Right ventricle myocardium inferior (tissue), 1 donor: ENCODE measurements at regions of chr6 and their contacts with region 1.

Region 1: GRCh38 chr6:125670568-125670967 is 78.9 kb upstream of the HEY2 start:
- DNase-seq: no peak
- ATAC-seq: peak; percentile 90

Region 2: GRCh38 chr6:125480571-125480970 is 190.0 kb before region 1 on chr6:
- intact Hi-C with region 1: no loop called
- DNase-seq: no peak
- ATAC-seq: no peak

Region 3: DNA sequence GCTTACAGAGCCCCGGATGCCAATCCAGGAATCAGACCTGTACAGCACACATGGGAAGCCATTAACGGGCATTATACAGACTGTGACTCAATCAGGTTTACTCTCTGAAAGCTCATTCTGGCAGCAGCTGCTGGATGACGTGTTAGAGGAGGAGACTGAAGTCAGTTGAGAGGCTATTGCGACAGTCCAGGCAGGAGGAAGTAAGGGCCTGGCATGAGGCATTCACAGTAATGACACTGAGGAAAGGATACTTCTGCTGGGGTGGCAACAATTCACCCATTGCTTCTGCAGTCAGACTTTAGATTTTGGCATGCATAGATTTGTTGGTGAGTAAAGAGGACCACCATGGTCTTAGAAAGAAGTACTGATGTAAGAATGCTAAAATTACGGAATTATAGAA is 72.1 kb before region 1 on chr6:
- intact Hi-C with region 1: loop called (anchors 5 kb)
- DNase-seq: peak; percentile 73
- ATAC-seq: peak; percentile 77

Region 4: DNA sequence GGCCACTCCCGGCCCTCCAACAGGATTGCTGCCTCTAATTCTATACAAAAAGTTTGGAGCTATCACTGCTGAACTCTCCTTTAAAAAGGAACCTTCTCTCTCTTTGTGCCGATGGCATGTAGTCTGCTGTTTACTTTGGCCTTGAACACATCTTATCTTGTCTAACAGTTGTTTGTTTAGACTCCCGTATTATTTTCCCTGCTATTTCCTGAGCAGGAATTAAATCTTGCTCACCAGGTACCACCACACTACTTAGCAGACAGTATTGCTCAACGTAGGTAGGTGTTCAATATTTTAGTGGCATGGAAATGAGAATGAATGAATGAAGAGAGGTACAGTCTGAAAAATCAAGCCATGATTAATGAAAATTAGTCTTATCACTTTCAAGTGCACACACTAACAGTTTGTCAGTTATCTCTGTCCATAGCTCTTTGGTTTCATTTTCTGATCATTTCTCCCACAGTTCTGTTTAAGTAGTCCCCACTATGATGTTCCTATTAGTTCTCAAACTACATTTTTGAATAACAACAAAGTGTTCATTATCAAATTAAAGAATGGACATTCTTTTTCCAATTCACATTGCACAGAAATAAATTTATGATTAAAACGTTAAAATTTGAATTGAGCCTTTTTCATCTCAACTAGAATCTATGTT is 72.0 kb after region 1 on chr6:
- intact Hi-C with region 1: loop called (anchors 2 kb)
- DNase-seq: no peak
- ATAC-seq: no peak